WTC11 (cell line): ENCODE measurements at regions of chr17 and their contacts with region 1.

Region 1: DNA sequence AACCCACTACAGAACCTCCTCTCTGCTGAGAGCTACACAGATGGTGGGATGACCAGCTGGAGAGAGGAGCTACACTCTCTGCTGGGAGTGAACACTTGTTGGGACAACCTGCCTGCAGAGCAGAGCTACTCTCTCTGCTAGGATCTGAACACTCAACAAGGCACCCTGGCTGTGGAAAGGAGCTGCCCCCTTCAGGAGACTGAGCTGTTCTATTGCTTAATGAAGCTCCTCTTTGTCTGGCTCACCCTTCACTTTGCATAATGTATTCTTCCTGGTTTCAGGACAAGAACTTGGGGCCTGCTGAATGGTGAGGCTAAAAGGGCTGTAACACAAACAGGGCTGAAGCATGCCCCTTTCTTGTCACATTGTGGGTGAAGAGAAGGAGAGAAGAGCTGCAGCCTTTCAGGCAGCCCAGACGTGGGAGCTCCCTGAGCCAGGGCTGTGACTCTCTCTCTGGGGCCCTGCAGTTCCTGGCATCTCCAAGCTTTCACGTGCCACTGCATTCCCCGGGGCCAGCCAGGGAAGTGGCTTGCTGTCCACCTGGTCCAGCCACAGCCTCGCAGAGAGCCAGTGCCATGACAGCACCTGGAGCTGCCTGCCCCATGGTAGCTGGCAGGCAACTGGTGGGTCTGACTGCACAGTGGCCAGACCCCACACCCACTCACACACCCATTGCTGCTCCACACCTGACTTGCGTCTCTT is 272.8 kb upstream of the KCNJ16 start:
- DNase-seq: no peak
- ATAC-seq: peak; percentile 93
- H3K4me3 Mint-ChIP-seq: no peak overlapping the region
- H3K27ac Mint-ChIP-seq: no peak overlapping the region
- H3K4me1 Mint-ChIP-seq: peaks cover 9% of the 10 kb centered on the region; the same call in 1 of the 2 replicates
- H3K27me3 Mint-ChIP-seq: no peaks in the 10 kb centered on the region
- CTCF ChIP-seq: no peak

Region 2: DNA sequence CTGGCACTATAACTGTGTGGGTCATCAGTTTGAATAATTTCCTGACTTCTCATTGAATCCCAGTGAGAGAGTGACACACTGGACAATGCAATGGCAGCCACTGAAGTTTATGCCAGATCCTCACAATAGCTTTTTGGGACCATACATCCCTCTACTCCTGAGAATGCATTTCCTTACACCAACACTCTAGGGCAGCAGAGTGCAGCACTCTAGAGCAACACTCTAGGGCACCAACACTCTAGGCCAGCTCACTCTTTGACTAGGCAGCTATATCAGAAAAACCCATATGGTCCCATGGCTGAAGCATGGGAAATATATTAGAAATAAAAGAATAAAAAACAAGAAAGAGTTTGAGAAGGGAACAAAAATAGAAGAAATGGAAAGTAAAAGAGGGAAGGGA is 78.4 kb before region 1 on chr17:
- CTCF ChIA-PET with region 1: interaction called, 13 read pairs
- POLR2A ChIA-PET with region 1: no interaction called
- DNase-seq: no peak
- ATAC-seq: peak; percentile 83
- H3K4me3 Mint-ChIP-seq: no peak overlapping the region
- H3K27ac Mint-ChIP-seq: no peak overlapping the region
- H3K4me1 Mint-ChIP-seq: peaks cover 4% of the 10 kb centered on the region
- H3K27me3 Mint-ChIP-seq: no peaks in the 10 kb centered on the region
- CTCF ChIP-seq: no peak

Region 3: DNA sequence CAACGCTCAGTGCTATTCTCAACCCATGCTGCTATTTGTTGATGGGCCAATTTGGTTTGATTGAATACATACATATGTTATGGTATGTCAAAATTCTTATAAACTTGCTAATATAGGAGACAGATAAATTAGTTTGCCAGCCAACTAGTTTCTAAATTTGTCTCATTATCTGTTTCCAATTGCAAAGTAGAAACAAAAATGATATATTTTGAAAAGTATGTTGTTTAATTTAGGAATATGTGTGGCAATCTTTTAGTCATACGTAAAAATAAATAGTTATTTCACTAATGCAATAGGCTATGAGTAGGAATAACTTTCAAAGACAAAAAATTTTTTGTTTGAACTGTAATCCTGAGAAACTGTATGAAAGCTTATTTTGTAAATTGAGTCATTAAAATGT is 62.3 kb after region 1 on chr17:
- CTCF ChIA-PET with region 1: no interaction called
- POLR2A ChIA-PET with region 1: no interaction called
- DNase-seq: no peak
- ATAC-seq: no peak
- H3K4me3 Mint-ChIP-seq: no peak overlapping the region
- H3K27ac Mint-ChIP-seq: no peak overlapping the region
- H3K4me1 Mint-ChIP-seq: peaks cover 2% of the 10 kb centered on the region; the same call in 1 of the 2 replicates
- H3K27me3 Mint-ChIP-seq: no peaks in the 10 kb centered on the region
- CTCF ChIP-seq: no peak

Region 4: GRCh38 chr17:69913216-69913615 is 111.0 kb after region 1 on chr17:
- CTCF ChIA-PET with region 1: no interaction called
- POLR2A ChIA-PET with region 1: no interaction called
- DNase-seq: no peak
- ATAC-seq: no peak
- H3K4me3 Mint-ChIP-seq: no peak overlapping the region
- H3K27ac Mint-ChIP-seq: no peak overlapping the region
- H3K4me1 Mint-ChIP-seq: peaks cover 12% of the 10 kb centered on the region
- H3K27me3 Mint-ChIP-seq: no peaks in the 10 kb centered on the region
- CTCF ChIP-seq: no peak